Activated naive CD4-positive, alpha-beta T cell treated with anti-CD3 and anti-CD28 coated beads, Interleukin-2, amount 10 ng/mL, durations not matched to agents 7 days and 5 days (primary cell): ENCODE measurements at regions of chr1 and their contacts with region 1.

Region 1: GRCh38 chr1:58652651-58653184 is 47.1 kb downstream of the MYSM1 start:
- DNase-seq: peak; percentile 67
- H3K4me3 Mint-ChIP-seq: no peak overlapping the region
- H3K27ac Mint-ChIP-seq: no peak overlapping the region
- H3K4me1 Mint-ChIP-seq: peaks cover 22% of the 10 kb centered on the region
- H3K27me3 Mint-ChIP-seq: no peaks in the 10 kb centered on the region

Region 2: GRCh38 chr1:58293388-58293787 is 359.3 kb before region 1 on chr1:
- CTCF ChIA-PET with region 1: no interaction called
- DNase-seq: no peak
- H3K4me3 Mint-ChIP-seq: no peak overlapping the region
- H3K27ac Mint-ChIP-seq: no peak overlapping the region
- H3K4me1 Mint-ChIP-seq: no peaks in the 10 kb centered on the region
- H3K27me3 Mint-ChIP-seq: no peaks in the 10 kb centered on the region

Region 3: DNA sequence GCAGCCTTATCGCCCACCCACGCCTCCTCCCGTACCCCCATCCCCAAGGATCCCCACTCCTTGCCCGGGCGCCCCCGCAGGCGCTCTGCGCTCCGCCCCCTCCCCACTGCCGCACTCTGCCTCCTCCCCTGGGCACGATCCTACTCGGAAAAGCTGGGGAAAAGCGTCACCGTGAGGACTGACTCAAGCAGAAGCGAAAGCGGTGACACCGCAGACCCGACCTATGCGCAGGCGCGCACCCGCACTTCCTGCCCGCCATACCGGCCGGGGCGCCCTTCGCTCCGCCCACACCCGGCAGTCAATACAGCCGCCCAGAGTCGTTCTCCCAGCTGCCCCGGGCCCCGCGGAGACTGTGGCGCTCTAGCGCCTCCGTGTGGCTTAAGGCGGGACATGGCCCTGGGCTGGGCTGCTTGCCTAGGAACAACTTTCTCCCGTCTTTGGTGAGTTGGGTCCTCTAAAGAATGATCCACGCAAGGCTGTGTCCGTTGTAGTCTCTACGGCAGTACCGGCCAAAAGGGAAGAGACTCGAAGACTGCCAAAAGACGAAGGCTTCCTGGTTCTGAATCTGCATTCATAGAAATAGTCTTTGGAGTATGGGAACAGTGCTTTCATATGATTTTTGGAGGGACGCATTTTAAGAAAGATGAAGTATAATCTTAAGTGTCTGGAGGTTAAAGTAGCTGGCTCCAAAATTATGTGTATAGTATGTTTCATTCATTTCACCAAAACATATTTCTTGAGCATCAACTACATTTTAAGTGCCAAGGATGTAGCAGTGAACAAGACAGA is 106.0 kb before region 1 on chr1 and contains the start of gene OMA1:
- CTCF ChIA-PET with region 1: interaction called, 20 read pairs
- DNase-seq: peak; percentile 97
- H3K4me3 Mint-ChIP-seq: peak within 1 kb of the TSS; percentile 92
- H3K27ac Mint-ChIP-seq: peak within 1 kb of the TSS; percentile 98
- H3K4me1 Mint-ChIP-seq: peaks cover 19% of the 10 kb centered on the region
- H3K27me3 Mint-ChIP-seq: peaks cover 23% of the 10 kb centered on the region

Region 4: DNA sequence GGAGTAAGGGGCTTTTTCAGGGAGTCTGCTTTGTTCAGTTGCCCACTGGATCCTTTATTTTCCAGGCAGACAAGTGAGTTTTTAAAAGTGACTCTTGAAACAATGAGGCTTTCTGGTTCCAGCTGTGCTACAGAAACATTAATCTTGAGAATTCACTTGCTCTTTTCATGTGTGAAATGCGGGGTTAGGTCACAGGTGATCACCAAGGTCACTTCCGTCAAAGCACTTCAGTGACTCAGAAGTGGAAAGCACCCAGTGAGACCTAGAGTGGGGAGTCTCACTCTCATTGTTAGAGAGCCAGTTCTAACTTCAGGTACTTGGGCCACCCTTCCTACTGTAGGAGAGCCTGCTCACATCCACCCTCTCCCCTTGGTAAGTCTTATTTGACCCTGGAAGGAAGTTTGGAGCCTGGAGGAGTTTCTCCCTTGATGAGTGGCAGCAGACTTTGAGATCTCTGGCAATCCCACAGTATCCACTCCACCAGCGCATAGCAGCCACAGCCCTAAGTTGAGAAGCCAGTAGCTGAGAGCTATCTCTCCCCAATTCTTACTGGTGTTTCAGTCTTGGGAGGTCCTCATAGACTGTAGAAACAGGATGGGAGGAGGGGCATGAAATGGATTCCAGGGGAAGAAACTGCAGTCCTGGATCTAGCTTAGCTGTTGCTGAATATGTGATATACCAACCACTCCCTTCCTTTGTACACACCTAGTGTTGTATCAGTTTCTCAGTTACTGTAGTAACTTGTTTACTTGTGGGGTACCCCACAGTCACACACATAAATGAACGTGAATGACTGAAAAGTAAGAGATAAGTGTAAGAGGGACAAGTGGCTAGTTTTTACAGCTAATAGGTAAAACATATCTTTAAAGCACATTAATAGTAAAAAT is 78.8 kb before region 1 on chr1:
- CTCF ChIA-PET with region 1: interaction called, 11 read pairs
- DNase-seq: peak; percentile 57
- H3K4me3 Mint-ChIP-seq: no peak overlapping the region
- H3K27ac Mint-ChIP-seq: peak overlapping the region; percentile 58
- H3K4me1 Mint-ChIP-seq: peaks cover 27% of the 10 kb centered on the region
- H3K27me3 Mint-ChIP-seq: peaks cover 82% of the 10 kb centered on the region

Region 5: DNA sequence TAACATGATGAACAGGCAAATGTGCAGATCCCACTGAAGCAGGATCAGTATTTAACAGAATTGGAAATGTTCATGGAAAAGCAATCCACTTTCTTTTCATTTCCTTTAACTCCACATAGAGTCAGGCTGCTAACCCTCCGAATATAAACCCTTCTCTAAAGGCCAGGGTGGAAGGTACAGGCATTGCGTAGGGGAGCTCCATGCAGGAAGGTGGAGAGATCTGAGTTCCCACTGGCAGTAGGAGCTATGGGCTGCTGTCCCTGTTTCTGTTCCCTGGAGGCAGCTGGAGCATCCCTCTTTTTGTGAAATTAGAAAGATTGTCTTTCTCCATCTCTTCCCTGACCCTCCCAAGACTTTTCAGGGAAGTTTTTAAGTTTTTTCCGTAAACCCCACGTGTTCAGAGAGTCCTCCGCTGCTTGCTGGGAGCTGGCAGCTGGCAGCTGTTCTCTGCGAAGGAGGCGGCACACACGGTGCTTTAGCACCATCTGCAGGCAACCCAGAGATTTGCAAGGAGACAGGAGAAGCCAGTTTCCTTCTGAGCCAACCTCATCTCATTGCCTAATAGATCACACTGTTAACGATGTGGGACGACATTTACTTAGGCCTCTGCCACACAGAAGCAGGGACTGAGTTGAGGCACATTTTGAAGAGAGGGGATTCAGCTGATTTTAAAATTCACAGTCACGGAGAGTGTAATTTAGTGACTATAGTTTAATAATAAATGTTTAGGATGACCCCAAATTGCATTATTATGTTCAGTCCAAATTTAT is 1106.6 kb after region 1 on chr1:
- CTCF ChIA-PET with region 1: interaction called, 12 read pairs
- DNase-seq: peak; percentile 79
- H3K4me3 Mint-ChIP-seq: no peak overlapping the region
- H3K27ac Mint-ChIP-seq: no peak overlapping the region
- H3K4me1 Mint-ChIP-seq: peaks cover 9% of the 10 kb centered on the region
- H3K27me3 Mint-ChIP-seq: peaks cover 4% of the 10 kb centered on the region